ENCODE measurements at regions of chr20 and their contacts with region 1.

Region 1: GRCh38 chr20:4358552-4358951 is 343.2 kb upstream of the RNF24 start:
- DNase-seq: no peak
- ATAC-seq: no peak

Region 2: DNA sequence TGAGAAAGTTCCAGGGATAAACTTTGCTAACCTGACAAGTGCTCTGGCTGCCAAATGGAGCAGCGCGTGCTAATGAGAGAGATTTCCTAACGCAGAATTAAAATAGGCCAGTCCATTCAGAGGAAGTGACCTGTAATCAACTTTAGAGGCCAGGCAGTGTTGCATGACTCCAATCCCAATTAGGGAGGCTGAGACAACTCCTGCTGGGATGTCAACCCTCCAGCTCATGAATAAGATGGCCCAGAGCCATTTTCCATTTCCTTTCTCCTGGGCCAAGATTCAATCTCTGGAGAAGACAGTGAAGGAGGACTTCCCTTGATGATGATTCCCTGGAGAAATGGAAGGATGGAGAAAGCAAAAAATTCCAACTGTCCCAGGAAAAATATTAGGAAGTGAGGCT is 101.7 kb before region 1 on chr20:
- intact Hi-C with region 1: loop called (anchors 10 kb)
- DNase-seq: no peak
- ATAC-seq: no peak

Region 3: GRCh38 chr20:4297127-4297826 is 61.3 kb before region 1 on chr20:
- intact Hi-C with region 1: no loop called
- DNase-seq: no peak
- ATAC-seq: peak; percentile 34

Region 4: DNA sequence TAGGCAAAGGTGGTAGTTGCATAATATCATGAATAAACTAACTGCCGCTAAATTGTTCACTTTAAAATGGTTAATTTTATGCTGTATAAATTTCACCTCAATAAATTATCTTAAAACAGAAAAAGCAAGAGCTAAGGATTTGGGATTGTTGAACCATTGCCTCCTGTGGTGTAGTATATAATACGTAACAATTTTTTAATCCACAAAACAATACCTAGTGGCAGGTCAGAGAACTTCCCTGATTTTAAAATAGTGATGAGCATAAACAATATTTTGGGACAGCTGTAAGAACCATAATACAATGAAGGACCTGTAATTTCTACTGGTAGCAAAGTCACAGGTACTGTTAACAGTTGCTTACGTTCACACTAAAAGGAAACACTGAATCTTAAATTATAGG is 165.8 kb after region 1 on chr20:
- intact Hi-C with region 1: no loop called
- DNase-seq: no peak
- ATAC-seq: no peak

Measured in Right ventricle myocardium inferior (tissue), 1 donor.